Pancreas (tissue), 10 donors: ENCODE measurements at regions of chr21 and their contacts with region 1.

Region 1: GRCh38 chr21:26170471-26171257 is at the start of gene APP:
- DNase-seq: peak; percentile 80 to 99 (median 90)
- ATAC-seq: peak; percentile 81 to 88 (median 86)
- H3K4me3 ChIP-seq: peak within 1 kb of the TSS; percentile 88 to 94 (median 90)
- H3K27ac ChIP-seq: peak within 1 kb of the TSS; percentile 71 to 91 (median 80)
- H3K4me1 ChIP-seq: peaks cover 13 to 30% (median 13%) of the 10 kb centered on the region in 3 donors
- H3K27me3 ChIP-seq: no peaks in the 10 kb centered on the region
- CTCF ChIP-seq: peak; percentile 97 to 99 (median 98)
- total RNA-seq, gene APP: 156 to 372 (median 180) TPM

Region 2: DNA sequence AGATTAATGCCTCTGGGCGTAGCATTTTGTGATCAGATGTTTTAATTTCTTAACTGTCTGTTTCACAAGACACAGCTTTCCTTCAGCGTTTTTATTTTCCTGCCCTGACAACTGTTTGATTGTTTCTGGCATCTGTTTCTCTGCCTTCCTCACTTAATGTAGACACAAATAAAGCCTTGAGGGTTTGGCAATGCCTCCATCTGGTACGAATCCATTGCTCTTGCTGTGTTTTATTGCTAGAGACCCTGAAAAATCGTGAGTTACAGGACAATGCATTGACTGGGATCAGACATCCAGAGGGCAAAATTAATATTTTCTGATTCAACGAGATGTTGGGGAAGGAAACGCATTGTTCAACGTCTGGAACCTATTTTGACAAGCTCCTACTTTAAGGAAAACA is 926.9 kb before region 1 on chr21:
- intact Hi-C with region 1: no loop called
- DNase-seq: no peak
- ATAC-seq: no peak
- H3K4me3 ChIP-seq: no peak overlapping the region
- H3K27ac ChIP-seq: no peak overlapping the region
- H3K4me1 ChIP-seq: no peaks in the 10 kb centered on the region
- H3K27me3 ChIP-seq: no peaks in the 10 kb centered on the region
- CTCF ChIP-seq: no peak

Region 3: DNA sequence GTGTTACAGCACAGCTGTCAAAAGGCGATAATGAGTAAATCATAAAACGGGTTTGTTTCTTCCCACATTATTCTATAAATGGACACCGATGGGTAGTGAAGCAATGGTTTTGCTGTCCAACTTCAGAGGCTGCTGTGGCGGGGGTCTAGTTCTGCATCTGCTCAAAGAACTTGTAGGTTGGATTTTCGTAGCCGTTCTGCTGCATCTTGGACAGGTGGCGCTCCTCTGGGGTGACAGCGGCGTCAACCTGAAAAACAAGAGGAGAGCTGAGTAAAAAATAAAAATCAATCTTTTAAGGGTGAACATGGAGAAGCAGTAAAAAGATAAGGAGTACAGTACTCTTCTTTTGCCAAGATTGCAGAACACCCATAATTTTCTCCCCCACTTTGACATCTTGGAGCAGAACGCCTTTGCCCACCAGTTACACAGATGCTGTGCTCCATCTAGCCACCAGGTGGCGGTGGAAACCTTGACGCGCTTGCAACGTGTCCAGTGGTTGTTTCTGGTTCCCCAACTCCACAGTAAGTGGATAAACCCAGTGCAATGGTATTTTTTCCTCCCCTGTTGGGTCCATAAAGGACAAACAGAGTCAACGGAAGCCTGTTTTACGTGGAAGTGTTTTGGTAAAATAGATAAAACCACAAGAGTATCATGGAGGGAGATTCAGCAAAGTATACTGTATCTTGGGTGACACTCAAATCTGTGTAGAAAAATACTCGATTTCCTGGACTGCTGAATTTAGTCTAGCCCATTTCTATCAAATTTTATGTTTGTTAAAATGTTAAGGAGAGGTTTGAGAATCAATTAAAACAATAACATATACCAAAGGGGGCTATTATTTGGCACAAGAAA is 288.9 kb before region 1 on chr21:
- intact Hi-C with region 1: loop called in 1 of 3 experiments (anchors 10 kb)
- DNase-seq: peak; percentile 26 to 82 (median 62)
- ATAC-seq: peak; percentile 78 to 97 (median 92)
- H3K4me3 ChIP-seq: no peak overlapping the region
- H3K27ac ChIP-seq: no peak overlapping the region
- H3K4me1 ChIP-seq: no peaks in the 10 kb centered on the region
- H3K27me3 ChIP-seq: no peaks in the 10 kb centered on the region
- CTCF ChIP-seq: peak; percentile 80 to 87 (median 84)

Region 4: DNA sequence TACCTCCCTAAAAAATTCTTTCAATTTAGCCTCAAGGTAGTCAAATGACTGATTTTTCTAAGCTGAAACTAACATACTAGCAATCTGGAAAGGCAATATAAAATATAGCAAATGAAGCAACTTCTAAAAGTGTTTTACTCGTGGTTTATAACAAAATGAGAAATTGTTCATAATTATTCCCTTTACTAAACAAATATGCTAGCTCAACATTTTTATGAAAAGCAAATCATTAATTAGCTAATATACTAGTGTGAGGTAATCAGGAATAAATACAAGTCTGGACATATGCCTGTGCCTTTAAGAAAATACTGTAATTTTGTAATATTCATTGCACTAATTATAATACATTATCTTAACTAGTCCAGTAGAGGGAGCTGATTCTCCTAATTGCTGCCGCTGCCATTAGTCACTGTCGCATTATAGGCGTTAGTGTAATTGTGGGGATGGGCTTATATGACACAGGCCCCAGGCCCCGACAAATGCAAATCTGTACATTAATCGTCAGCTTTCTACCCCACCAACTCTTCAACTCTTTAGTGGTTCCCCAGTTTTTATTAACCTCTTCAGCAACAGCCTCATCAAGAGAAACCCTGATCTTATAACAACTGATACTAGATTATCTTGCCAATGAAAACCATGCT is 275.0 kb before region 1 on chr21:
- intact Hi-C with region 1: loop called in 1 of 3 experiments (anchors 5 kb)
- DNase-seq: no peak
- ATAC-seq: peak; percentile 86 to 95 (median 90)
- H3K4me3 ChIP-seq: no peak overlapping the region
- H3K27ac ChIP-seq: no peak overlapping the region
- H3K4me1 ChIP-seq: no peaks in the 10 kb centered on the region
- H3K27me3 ChIP-seq: no peaks in the 10 kb centered on the region
- CTCF ChIP-seq: peak in 3 of 4 donors; percentile 19 to 36 (median 20)